MCF 10A (cell line): ENCODE measurements at regions of chr1 and their contacts with region 1.

Region 1: DNA sequence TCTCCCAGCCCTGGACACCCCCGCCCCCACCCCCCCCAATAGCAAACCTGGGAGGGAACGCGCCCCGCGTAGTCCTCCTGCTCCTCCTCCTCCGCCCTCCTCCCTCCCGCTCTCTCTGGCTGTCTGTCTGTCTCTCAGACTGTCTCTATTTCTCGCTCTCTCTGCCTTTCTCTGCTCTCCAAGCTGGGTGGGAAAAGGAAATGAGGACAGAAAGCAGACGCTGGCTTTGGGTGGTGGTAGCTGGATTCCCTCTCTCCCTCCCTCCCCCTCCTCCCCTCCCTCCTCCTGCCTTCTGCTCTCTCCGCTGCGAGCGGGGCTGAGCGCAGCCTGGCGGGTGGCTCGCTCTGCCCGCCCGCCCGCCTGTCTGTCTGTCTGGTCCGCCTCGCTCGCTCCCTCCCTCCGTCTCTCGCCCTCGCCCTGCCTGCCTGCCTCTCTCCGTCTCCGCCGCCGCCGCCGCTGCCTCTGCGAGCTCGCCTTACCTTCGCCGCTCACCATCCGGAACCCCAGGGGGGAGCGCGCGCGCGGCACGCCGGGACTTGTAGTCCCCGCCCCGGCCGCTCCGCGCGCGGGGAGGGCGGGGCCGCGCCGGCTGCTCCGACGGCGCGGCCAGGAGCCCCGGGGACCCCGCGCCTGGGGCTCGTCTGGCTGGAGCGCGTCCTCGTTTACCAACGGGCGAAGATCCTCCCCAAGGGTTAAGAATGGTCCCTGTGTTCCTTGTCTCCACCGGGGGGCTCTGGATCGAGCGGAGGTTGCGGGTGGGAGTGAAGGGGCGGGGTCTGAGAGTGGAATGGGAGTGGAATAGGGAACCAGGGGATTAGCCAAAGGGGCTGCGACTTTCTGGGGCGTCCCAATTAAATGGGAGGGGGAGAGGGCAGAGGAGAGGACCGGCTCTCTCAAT is at the start of gene AHDC1:
- DNase-seq: peak; percentile 91
- H3K4me3 Mint-ChIP-seq: peak within 1 kb of the TSS; percentile 90
- H3K27ac Mint-ChIP-seq: peak within 1 kb of the TSS; percentile 63
- H3K4me1 Mint-ChIP-seq: peaks cover 30% of the 10 kb centered on the region
- H3K27me3 Mint-ChIP-seq: no peaks in the 10 kb centered on the region
- CTCF ChIP-seq: no peak
- total RNA-seq, gene AHDC1: 18.4 and 25.2 TPM in 2 replicates

Region 2: GRCh38 chr1:27380766-27381733 is 222.9 kb before region 1 on chr1:
- CTCF ChIA-PET with region 1: no interaction called
- POLR2A ChIA-PET with region 1: no interaction called
- intact Hi-C with region 1: no loop called
- DNase-seq: no peak
- H3K4me3 Mint-ChIP-seq: no peak overlapping the region
- H3K27ac Mint-ChIP-seq: no peak overlapping the region
- H3K4me1 Mint-ChIP-seq: peaks cover 12% of the 10 kb centered on the region
- H3K27me3 Mint-ChIP-seq: no peaks in the 10 kb centered on the region
- CTCF ChIP-seq: no peak

Region 3: GRCh38 chr1:27402349-27402754 is 201.6 kb before region 1 on chr1:
- CTCF ChIA-PET with region 1: interaction called, 52 read pairs
- POLR2A ChIA-PET with region 1: interaction called, 3 read pairs
- intact Hi-C with region 1: loop called (anchors 1 kb)
- DNase-seq: peak; percentile 57
- H3K4me3 Mint-ChIP-seq: no peak overlapping the region
- H3K27ac Mint-ChIP-seq: no peak overlapping the region
- H3K4me1 Mint-ChIP-seq: no peaks in the 10 kb centered on the region
- H3K27me3 Mint-ChIP-seq: no peaks in the 10 kb centered on the region
- CTCF ChIP-seq: peak; percentile 35

Region 4: GRCh38 chr1:27556781-27557595 is 46.9 kb before region 1 on chr1:
- CTCF ChIA-PET with region 1: interaction called, 62 read pairs
- POLR2A ChIA-PET with region 1: interaction called, 37 read pairs
- intact Hi-C with region 1: loop called (anchors 1 kb)
- DNase-seq: peak; percentile 97
- H3K4me3 Mint-ChIP-seq: peak overlapping the region; percentile 44
- H3K27ac Mint-ChIP-seq: peak overlapping the region; percentile 44
- H3K4me1 Mint-ChIP-seq: peaks cover 36% of the 10 kb centered on the region
- H3K27me3 Mint-ChIP-seq: no peaks in the 10 kb centered on the region
- CTCF ChIP-seq: peak; percentile 96

Region 5: DNA sequence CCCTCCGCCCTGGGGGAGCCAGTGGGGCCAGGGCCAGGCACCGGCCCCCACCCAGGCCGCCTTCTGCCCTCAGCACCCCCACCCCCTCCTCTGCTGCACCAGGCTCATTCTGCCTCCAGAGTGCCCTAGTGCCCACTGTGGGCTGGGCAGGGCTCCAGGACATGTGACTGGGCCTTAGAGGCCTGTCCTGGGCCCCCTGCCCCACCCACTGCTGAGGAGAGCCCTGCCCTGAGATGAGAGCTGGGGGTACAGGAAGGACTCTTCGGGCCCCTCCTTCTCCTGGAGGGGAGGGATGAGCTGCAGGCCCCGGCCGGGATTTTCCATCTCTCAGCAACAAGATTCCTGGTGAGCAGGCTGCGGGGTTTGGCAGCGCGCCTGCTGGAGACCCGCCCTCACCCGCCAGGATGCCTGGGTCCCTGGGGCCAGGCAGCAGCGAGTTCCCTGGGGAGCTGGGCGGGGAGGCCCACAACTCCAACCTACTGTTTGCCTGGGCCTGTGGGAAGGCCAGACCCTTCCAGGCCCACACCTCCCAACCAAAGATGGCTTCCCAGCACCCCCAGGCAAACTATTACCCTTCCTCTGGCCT is 14.0 kb before region 1 on chr1:
- CTCF ChIA-PET with region 1: interaction called, 11 read pairs
- POLR2A ChIA-PET with region 1: interaction called, 3 read pairs
- intact Hi-C with region 1: no loop called
- DNase-seq: peak; percentile 28
- H3K4me3 Mint-ChIP-seq: no peak overlapping the region
- H3K27ac Mint-ChIP-seq: no peak overlapping the region
- H3K4me1 Mint-ChIP-seq: peaks cover 10% of the 10 kb centered on the region
- H3K27me3 Mint-ChIP-seq: no peaks in the 10 kb centered on the region
- CTCF ChIP-seq: no peak

Region 6: GRCh38 chr1:27662707-27663393 is 58.9 kb after region 1 on chr1:
- CTCF ChIA-PET with region 1: interaction called, 160 read pairs
- POLR2A ChIA-PET with region 1: interaction called, 19 read pairs
- intact Hi-C with region 1: loop called (anchors 1 kb)
- DNase-seq: peak; percentile 86
- H3K4me3 Mint-ChIP-seq: no peak overlapping the region
- H3K27ac Mint-ChIP-seq: peak overlapping the region; percentile 81
- H3K4me1 Mint-ChIP-seq: peaks cover 29% of the 10 kb centered on the region
- H3K27me3 Mint-ChIP-seq: no peaks in the 10 kb centered on the region
- CTCF ChIP-seq: peak; percentile 69